ENCODE measurements at regions of chrX and their contacts with region 1.

Region 1: GRCh38 chrX:111098874-111099273 is 2.9 kb downstream of the PAK3 start:
- DNase-seq: peak in 1 of 2 experiments; percentile 8
- H3K4me3 ChIP-seq: no peak overlapping the region
- H3K27ac ChIP-seq: no peak overlapping the region
- H3K4me1 ChIP-seq: no peaks in the 10 kb centered on the region
- H3K27me3 ChIP-seq: peaks cover 13% of the 10 kb centered on the region; the same call in 1 of the 2 replicates
- CTCF ChIP-seq: peak; percentile 68

Region 2: GRCh38 chrX:110450050-110450449 is 648.8 kb before region 1 on chrX:
- CTCF ChIA-PET with region 1: no interaction called
- POLR2A ChIA-PET with region 1: no interaction called
- intact Hi-C with region 1: loop called (anchors 5 kb)
- DNase-seq: peak; percentile 55 to 75
- H3K4me3 ChIP-seq: no peak overlapping the region
- H3K27ac ChIP-seq: no peak overlapping the region
- H3K4me1 ChIP-seq: no peaks in the 10 kb centered on the region
- H3K27me3 ChIP-seq: peaks cover 47% of the 10 kb centered on the region
- CTCF ChIP-seq: peak; percentile 89

Region 3: DNA sequence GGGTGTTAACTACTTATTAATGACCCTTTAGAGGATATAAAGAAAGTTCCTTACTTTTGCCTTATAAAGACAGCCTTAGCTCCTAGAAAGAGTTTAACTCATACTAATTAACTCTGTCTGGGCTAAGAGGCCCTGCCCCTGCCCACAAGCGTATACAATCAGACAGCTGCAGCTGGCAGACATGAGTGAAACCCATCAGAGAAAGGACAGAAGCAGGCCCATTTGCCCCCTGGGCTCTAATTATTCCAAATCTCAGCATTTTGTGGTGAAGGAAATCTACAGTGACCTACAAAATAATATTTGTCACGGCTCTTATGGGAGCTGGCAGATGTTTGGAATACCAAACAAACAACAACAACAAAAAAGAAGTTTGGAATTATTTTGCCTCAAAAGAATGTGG is 375.0 kb before region 1 on chrX:
- CTCF ChIA-PET with region 1: no interaction called
- POLR2A ChIA-PET with region 1: no interaction called
- intact Hi-C with region 1: no loop called
- DNase-seq: no peak
- H3K4me3 ChIP-seq: no peak overlapping the region
- H3K27ac ChIP-seq: no peak overlapping the region
- H3K4me1 ChIP-seq: no peaks in the 10 kb centered on the region
- H3K27me3 ChIP-seq: no peaks in the 10 kb centered on the region
- CTCF ChIP-seq: no peak

Region 4: GRCh38 chrX:110853610-110854009 is 245.3 kb before region 1 on chrX:
- CTCF ChIA-PET with region 1: interaction called, 7 read pairs
- POLR2A ChIA-PET with region 1: no interaction called
- intact Hi-C with region 1: loop called (anchors 10 kb)
- DNase-seq: no peak
- H3K4me3 ChIP-seq: no peak overlapping the region
- H3K27ac ChIP-seq: no peak overlapping the region
- H3K4me1 ChIP-seq: peaks cover 6% of the 10 kb centered on the region; the same call in 1 of the 2 replicates
- H3K27me3 ChIP-seq: no peaks in the 10 kb centered on the region
- CTCF ChIP-seq: peak; percentile 69